ENCODE measurements at regions of chr9 and their contacts with region 1.

Region 1: GRCh38 chr9:2209400-2209799 is 194.3 kb downstream of the SMARCA2 start:
- DNase-seq: no peak
- H3K4me3 ChIP-seq: no peak overlapping the region
- H3K27ac ChIP-seq: no peak overlapping the region
- H3K4me1 ChIP-seq: peaks cover 7% of the 10 kb centered on the region
- H3K27me3 ChIP-seq: no peaks in the 10 kb centered on the region
- CTCF ChIP-seq: no peak

Region 2: GRCh38 chr9:2174306-2174705 is 35.1 kb before region 1 on chr9:
- CTCF ChIA-PET with region 1: no interaction called
- POLR2A ChIA-PET with region 1: interaction called, 13 read pairs
- intact Hi-C with region 1: no loop called
- DNase-seq: no peak
- H3K4me3 ChIP-seq: no peak overlapping the region
- H3K27ac ChIP-seq: no peak overlapping the region
- H3K4me1 ChIP-seq: no peaks in the 10 kb centered on the region
- H3K27me3 ChIP-seq: no peaks in the 10 kb centered on the region
- CTCF ChIP-seq: no peak